MCF 10A (cell line): ENCODE measurements at regions of chr1 and their contacts with region 1.

Region 1: GRCh38 chr1:88877382-88877825 is 14.0 kb downstream of the GTF2B start:
- DNase-seq: peak; percentile 36
- H3K4me3 Mint-ChIP-seq: no peak overlapping the region
- H3K27ac Mint-ChIP-seq: no peak overlapping the region
- H3K4me1 Mint-ChIP-seq: peaks cover 15% of the 10 kb centered on the region
- H3K27me3 Mint-ChIP-seq: no peaks in the 10 kb centered on the region
- CTCF ChIP-seq: peak; percentile 40

Region 2: DNA sequence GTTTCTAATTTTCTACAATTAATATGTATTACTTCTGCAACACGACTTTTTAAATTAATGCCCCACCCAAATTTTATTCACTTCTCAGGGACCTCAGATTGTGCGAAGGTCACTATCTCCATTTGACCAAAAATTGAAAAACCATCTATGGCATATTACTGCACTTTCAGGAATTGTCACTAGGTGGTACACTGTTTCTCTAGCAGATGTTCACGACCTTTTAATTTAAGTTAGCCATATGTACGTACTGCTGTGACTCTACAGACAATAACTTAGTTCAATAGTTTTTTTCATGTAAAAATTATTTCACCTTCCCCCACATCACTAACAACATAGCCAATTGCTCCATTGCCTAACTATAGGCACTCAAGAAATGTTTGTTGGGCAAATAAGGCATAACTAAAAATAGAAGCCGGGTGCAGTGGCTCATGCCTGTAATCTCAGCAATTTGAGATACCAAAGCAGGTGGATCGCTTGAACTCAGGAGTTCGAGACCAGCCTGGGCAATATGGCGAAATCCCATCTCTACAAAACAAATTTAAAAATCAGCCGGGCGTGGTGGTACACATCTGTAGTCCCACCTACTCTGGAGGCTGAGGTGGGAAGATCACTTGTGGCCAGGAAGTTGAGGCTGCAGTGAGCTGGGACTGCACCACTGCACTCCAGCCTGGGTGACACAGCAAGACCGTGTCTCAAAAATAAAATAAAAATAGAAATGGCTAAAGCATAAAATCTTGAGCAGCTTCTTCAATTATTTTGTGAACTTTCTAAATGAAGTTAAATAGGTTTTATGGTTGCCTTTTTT is 269.1 kb before region 1 on chr1:
- CTCF ChIA-PET with region 1: interaction called, 8 read pairs
- POLR2A ChIA-PET with region 1: no interaction called
- intact Hi-C with region 1: loop called (anchors 2 kb)
- DNase-seq: peak; percentile 56
- H3K4me3 Mint-ChIP-seq: no peak overlapping the region
- H3K27ac Mint-ChIP-seq: no peak overlapping the region
- H3K4me1 Mint-ChIP-seq: peaks cover 6% of the 10 kb centered on the region
- H3K27me3 Mint-ChIP-seq: no peaks in the 10 kb centered on the region
- CTCF ChIP-seq: peak; percentile 58

Region 3: GRCh38 chr1:88655685-88656299 is 221.6 kb before region 1 on chr1:
- CTCF ChIA-PET with region 1: interaction called, 79 read pairs
- POLR2A ChIA-PET with region 1: no interaction called
- intact Hi-C with region 1: loop called (anchors 1 kb)
- DNase-seq: peak; percentile 31
- H3K4me3 Mint-ChIP-seq: no peak overlapping the region
- H3K27ac Mint-ChIP-seq: peak overlapping the region; percentile 36
- H3K4me1 Mint-ChIP-seq: no peaks in the 10 kb centered on the region
- H3K27me3 Mint-ChIP-seq: no peaks in the 10 kb centered on the region
- CTCF ChIP-seq: peak; percentile 37

Region 4: DNA sequence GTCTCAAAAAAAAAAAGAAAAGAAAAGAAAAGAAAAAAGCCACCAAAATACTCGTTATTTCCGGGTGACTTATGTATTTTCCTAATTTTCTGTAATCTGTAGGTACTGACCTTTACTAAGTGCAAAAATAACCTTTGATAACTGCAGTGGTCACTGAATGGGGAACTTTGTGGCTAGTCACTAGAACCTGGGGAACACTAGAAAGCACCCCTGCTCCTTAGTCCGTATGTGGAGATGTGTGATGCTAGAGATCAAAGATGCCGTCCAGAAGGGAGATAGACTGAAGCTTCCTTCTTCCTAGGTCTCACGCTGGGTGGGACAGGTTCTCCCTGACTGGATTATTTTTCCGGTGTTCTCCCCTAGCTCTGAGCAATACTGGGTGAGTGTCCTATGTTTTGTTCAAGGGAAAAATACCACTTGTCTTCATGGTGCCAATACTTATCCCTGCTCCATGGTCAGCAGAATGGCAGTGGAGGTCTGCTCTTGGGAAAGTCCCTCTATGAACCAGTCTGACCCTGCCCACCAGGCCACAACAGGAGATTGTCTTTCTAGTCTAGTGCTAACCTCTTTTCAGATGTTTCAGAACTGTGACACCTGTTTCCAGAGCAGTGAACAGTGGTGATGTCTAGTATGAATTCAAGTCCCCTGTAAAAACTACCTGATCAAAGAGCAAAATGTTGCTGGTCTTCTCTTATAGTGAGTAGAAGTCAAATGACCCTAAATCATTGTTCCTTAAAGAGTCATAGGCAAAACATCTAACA is 25.9 kb before region 1 on chr1:
- CTCF ChIA-PET with region 1: interaction called, 12 read pairs
- POLR2A ChIA-PET with region 1: interaction called, 3 read pairs
- intact Hi-C with region 1: no loop called
- DNase-seq: no peak
- H3K4me3 Mint-ChIP-seq: no peak overlapping the region
- H3K27ac Mint-ChIP-seq: no peak overlapping the region
- H3K4me1 Mint-ChIP-seq: peaks cover 4% of the 10 kb centered on the region
- H3K27me3 Mint-ChIP-seq: no peaks in the 10 kb centered on the region
- CTCF ChIP-seq: no peak

Region 5: DNA sequence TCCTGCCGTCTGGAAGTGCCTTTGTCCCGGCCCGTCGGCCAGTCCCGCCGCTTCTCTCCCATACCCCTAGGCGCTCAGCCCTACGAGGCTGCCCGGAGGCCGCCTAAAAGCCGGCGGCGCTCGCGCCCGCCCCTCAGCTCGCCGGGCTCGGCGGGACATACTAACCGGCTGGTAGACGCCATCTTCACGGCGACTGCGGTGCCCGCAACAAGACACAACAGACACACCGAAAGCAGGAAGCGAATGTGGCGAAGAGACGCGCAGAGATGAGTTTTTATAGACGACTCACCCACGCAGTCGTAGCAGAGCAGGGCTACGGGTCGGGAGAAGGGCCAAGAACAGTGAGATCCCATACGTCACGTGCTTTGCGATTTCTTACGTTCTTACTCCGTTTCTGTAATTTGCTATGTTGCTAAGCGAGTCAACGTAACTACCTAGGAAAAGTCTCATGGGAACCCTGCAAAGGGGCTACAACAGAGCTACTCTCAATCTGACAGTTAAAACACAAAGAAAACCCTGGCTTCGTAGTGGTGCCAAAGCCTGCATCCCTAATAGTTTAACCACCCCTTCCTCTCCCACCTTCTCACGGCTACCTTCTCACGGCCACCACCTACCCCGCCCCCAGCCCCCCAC is 14.0 kb after region 1 on chr1 and contains the start of gene GTF2B:
- CTCF ChIA-PET with region 1: interaction called, 49 read pairs
- POLR2A ChIA-PET with region 1: interaction called, 4 read pairs
- intact Hi-C with region 1: no loop called
- DNase-seq: peak; percentile 96
- H3K4me3 Mint-ChIP-seq: peak within 1 kb of the TSS; percentile 99
- H3K27ac Mint-ChIP-seq: peak within 1 kb of the TSS; percentile 99
- H3K4me1 Mint-ChIP-seq: peaks cover 19% of the 10 kb centered on the region
- H3K27me3 Mint-ChIP-seq: no peaks in the 10 kb centered on the region
- CTCF ChIP-seq: no peak
- total RNA-seq, gene GTF2B: 16.9 and 18.8 TPM in 2 replicates